ENCODE measurements at regions of chr17 and their contacts with region 1.

Region 1: DNA sequence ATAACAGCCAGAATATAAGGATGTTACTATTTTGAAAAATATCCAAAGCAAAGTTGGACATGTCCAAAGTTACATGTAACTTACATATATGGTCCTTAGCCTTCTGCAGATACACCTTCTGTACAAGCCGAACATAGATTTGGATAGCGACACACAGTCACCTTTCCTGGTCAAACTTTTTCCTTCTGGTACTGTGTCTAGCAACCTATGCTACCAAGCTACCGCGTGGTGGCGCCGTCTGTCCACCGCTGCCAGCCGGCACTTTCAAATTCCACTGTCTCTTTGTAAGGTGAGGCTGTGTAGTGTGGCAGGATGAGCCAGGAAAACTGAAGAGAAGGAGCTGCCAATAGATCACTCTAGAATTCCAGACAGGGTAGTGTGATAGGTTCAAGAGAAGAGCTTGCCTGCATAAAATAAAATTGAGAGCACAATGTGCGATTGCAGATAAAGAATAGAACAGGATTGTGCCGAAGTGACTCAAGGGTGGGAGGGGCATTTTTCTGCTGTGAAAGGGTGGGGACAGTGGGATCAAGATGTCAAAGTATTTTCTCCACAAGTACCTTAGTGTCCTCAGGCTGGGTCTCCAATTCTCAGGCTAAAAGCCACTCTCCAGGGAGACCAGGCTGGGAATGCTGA is 366.9 kb downstream of the SLC39A11 start:
- DNase-seq: peak; percentile 72
- H3K4me3 Mint-ChIP-seq: no peak overlapping the region
- H3K27ac Mint-ChIP-seq: no peak overlapping the region
- H3K4me1 Mint-ChIP-seq: peaks cover 19% of the 10 kb centered on the region
- H3K27me3 Mint-ChIP-seq: no peaks in the 10 kb centered on the region
- CTCF ChIP-seq: peak; percentile 78

Region 2: GRCh38 chr17:72362376-72363088 is 363.0 kb before region 1 on chr17:
- CTCF ChIA-PET with region 1: no interaction called
- POLR2A ChIA-PET with region 1: no interaction called
- intact Hi-C with region 1: no loop called
- DNase-seq: peak; percentile 93
- H3K4me3 Mint-ChIP-seq: peak overlapping the region; percentile 45
- H3K27ac Mint-ChIP-seq: peak overlapping the region; percentile 83
- H3K4me1 Mint-ChIP-seq: peaks cover 33% of the 10 kb centered on the region
- H3K27me3 Mint-ChIP-seq: no peaks in the 10 kb centered on the region
- CTCF ChIP-seq: no peak

Region 3: DNA sequence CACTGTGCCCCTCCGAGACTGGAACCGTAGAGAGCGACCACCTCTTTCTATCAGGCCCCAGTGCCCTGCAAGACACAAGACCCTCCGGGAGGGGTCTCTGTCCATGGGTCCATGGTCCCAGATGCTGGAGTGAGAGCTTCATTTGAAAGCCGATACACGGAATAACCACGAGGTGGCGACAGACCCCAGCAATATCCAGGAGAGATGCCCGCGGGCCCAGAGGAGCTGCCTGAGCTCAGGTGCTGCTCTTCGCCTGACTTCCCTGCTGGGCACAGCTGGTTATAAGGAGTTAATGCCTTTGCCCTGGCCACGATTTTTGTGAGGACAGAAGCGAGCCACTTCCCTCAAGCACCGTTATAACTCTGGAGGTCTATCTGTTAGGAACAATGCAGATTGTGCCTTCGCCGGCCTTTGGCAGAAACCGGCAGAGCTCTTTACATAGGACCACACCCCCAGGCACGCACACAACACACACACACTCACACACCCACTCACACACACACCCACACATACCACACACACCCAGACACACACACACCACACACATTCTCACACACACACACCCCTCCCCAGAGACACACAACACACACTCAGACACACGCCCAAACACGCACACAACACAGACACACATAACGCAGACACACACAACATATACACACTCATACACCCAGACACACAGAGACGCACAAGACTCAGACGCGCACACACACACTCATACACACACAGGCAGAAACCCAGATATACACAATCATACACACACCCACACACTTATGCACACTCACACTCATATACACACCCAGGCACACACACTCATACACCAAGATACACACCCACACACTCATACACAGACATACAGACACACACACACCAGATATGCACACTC is 168.4 kb before region 1 on chr17:
- CTCF ChIA-PET with region 1: interaction called, 165 read pairs
- POLR2A ChIA-PET with region 1: interaction called, 10 read pairs
- intact Hi-C with region 1: loop called (anchors 1 kb)
- DNase-seq: peak; percentile 81
- H3K4me3 Mint-ChIP-seq: no peak overlapping the region
- H3K27ac Mint-ChIP-seq: no peak overlapping the region
- H3K4me1 Mint-ChIP-seq: peaks cover 21% of the 10 kb centered on the region
- H3K27me3 Mint-ChIP-seq: no peaks in the 10 kb centered on the region
- CTCF ChIP-seq: peak; percentile 85

Region 4: DNA sequence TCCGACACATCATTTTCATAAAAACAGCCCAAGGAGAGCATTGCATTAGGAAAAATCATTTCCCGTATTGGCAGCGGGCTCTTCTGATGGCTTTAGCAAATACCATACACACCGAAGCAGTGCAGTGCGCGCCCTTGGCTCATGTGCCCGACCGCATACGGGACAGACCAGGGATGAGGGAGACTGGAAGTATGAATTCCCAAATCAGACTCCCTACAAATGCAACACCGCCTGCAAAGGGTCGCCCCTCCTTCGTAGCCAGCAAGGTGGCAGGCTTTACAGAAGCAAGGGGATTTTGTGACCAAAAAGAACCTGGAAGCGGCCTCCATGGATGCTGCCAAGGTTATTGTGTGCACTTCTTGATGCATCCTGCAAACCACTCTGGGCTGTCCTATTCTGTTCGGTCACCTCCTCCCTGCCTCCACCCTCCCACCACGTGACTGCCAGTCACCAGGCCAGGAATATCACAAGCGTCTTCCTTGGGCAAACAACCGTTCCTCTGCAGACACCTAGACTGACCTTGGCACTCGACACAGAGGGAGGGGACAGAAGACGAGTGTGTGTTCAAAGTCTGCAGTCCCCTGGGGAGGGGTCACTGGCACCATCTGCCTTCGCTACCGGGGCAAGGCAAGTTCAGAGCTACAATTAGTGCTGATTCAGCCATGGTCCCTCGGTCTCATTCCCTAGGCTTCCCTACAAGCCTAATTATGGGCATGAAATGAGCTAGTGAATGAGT is 93.4 kb before region 1 on chr17:
- CTCF ChIA-PET with region 1: no interaction called
- POLR2A ChIA-PET with region 1: no interaction called
- intact Hi-C with region 1: no loop called
- DNase-seq: no peak
- H3K4me3 Mint-ChIP-seq: no peak overlapping the region
- H3K27ac Mint-ChIP-seq: no peak overlapping the region
- H3K4me1 Mint-ChIP-seq: peaks cover 12% of the 10 kb centered on the region
- H3K27me3 Mint-ChIP-seq: no peaks in the 10 kb centered on the region
- CTCF ChIP-seq: no peak

Region 5: DNA sequence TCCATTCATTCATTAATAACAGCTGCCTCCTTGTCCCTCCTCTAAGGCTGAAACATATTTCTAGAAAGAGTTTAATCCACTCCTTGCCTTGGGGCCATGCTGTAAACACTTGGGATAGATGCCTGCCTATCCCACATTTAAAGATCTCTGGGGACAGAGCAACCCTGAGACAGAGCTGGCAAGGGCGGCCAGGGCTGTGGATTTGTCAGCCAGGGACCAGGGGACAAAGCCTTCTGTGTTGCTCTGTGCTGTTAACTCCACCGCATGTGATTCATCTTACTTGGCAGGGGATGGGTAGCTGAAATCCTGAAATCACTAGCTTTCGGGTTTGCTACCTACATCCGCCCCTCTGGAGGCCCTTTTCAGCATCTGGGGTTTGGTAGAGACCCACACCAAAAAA is 26.0 kb before region 1 on chr17:
- CTCF ChIA-PET with region 1: interaction called, 10 read pairs
- POLR2A ChIA-PET with region 1: no interaction called
- intact Hi-C with region 1: no loop called
- DNase-seq: peak; percentile 70
- H3K4me3 Mint-ChIP-seq: no peak overlapping the region
- H3K27ac Mint-ChIP-seq: peak overlapping the region; percentile 51
- H3K4me1 Mint-ChIP-seq: peaks cover 24% of the 10 kb centered on the region
- H3K27me3 Mint-ChIP-seq: no peaks in the 10 kb centered on the region
- CTCF ChIP-seq: no peak

Region 6: DNA sequence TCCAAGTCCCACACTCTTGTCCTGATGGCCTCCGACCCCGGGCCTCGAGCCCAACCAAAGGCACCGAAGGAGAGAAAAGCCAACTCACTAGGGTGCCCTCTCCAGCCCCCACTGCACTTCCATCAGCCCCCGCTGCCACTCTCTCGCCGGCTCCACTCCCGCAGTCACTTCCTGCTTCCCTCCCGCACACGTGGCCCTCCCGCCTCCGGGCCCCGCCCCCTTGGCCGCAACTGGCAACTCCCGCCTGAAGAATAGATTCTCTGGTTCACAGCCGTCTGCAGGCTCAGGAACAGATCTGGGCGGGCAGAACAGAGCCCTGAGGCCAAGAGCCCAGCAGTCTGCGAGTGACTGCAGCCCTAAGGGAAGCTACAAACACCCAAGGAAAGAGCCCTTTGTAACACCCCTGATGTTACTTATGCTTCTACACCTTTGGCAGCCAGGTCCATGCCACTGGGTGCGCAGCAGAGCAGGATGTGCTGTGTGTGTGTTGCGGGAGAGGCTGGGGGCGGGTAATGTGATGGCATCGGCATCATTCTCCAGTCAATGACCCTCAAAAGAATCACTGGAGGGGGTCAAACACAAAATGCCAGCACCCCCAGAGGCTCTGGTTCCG is 367.1 kb after region 1 on chr17 and contains the start of gene SLC39A11:
- CTCF ChIA-PET with region 1: interaction called, 3 read pairs
- POLR2A ChIA-PET with region 1: no interaction called
- intact Hi-C with region 1: loop called (anchors 5 kb)
- DNase-seq: peak; percentile 92
- H3K4me3 Mint-ChIP-seq: peak within 1 kb of the TSS; percentile 98
- H3K27ac Mint-ChIP-seq: peak within 1 kb of the TSS; percentile 93
- H3K4me1 Mint-ChIP-seq: peaks cover 16% of the 10 kb centered on the region
- H3K27me3 Mint-ChIP-seq: peaks cover 14% of the 10 kb centered on the region
- CTCF ChIP-seq: no peak
- total RNA-seq, gene SLC39A11: 15.8 and 16.1 TPM in 2 replicates

Region 7: GRCh38 chr17:73192894-73193701 is 467.5 kb after region 1 on chr17 and contains the start of gene COG1:
- CTCF ChIA-PET with region 1: interaction called, 130 read pairs
- POLR2A ChIA-PET with region 1: interaction called, 8 read pairs
- intact Hi-C with region 1: no loop called
- DNase-seq: peak; percentile 89
- H3K4me3 Mint-ChIP-seq: peak within 1 kb of the TSS; percentile 95
- H3K27ac Mint-ChIP-seq: peak within 1 kb of the TSS; percentile 93
- H3K4me1 Mint-ChIP-seq: peaks cover 6% of the 10 kb centered on the region
- H3K27me3 Mint-ChIP-seq: no peaks in the 10 kb centered on the region
- CTCF ChIP-seq: no peak
- total RNA-seq, gene COG1: 37.0 and 42.8 TPM in 2 replicates

Region 8: GRCh38 chr17:73255671-73256181 is 530.2 kb after region 1 on chr17:
- CTCF ChIA-PET with region 1: interaction called, 20 read pairs
- POLR2A ChIA-PET with region 1: no interaction called
- intact Hi-C with region 1: loop called (anchors 2 kb)
- DNase-seq: peak; percentile 43
- H3K4me3 Mint-ChIP-seq: no peak overlapping the region
- H3K27ac Mint-ChIP-seq: no peak overlapping the region
- H3K4me1 Mint-ChIP-seq: no peaks in the 10 kb centered on the region
- H3K27me3 Mint-ChIP-seq: no peaks in the 10 kb centered on the region
- CTCF ChIP-seq: peak; percentile 98